ENCODE measurements at regions of chr2 and their contacts with region 1.

Region 1: GRCh38 chr2:38274286-38275276 is 102.5 kb downstream of the ATL2 start:
- DNase-seq: peak; percentile 72
- H3K4me3 ChIP-seq: no peak overlapping the region
- H3K27ac ChIP-seq: no peak overlapping the region
- H3K27me3 ChIP-seq: peaks cover 8% of the 10 kb centered on the region
- CTCF ChIP-seq: peak; percentile 68

Region 2: GRCh38 chr2:37890893-37891495 is 383.6 kb before region 1 on chr2:
- CTCF ChIA-PET with region 1: interaction called, 14 read pairs
- POLR2A ChIA-PET with region 1: no interaction called
- DNase-seq: no peak
- H3K4me3 ChIP-seq: no peak overlapping the region
- H3K27ac ChIP-seq: no peak overlapping the region
- H3K27me3 ChIP-seq: peaks cover under 1% of the 10 kb centered on the region
- CTCF ChIP-seq: peak; percentile 91

Region 3: DNA sequence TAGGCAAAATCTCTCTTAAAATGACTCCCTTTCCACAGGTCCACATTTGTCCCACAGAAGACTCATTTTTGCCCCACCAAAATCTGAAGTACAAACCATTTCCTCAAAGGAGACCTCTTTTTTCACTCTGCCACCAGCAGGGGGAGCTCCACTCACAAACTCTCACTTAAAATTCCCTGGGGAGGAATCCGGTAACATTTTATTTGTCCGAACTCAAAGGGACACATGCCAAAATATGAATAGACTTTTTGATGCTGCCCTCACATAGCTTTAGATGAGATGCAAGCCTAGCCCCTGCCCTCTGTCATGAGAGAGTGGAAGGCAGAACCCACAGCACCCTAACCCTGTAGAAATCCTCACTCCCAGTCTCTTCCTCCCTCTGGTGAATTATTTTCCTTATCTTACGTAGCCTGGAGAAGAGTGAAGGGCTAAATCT is 292.4 kb before region 1 on chr2:
- CTCF ChIA-PET with region 1: interaction called, 40 read pairs
- POLR2A ChIA-PET with region 1: no interaction called
- DNase-seq: no peak
- H3K4me3 ChIP-seq: no peak overlapping the region
- H3K27ac ChIP-seq: no peak overlapping the region
- H3K27me3 ChIP-seq: no peaks in the 10 kb centered on the region
- CTCF ChIP-seq: peak; percentile 84

Region 4: GRCh38 chr2:38115216-38116032 is 159.2 kb before region 1 on chr2:
- CTCF ChIA-PET with region 1: interaction called, 11 read pairs
- POLR2A ChIA-PET with region 1: no interaction called
- DNase-seq: no peak
- H3K4me3 ChIP-seq: no peak overlapping the region
- H3K27ac ChIP-seq: no peak overlapping the region
- H3K27me3 ChIP-seq: peaks cover 2% of the 10 kb centered on the region
- CTCF ChIP-seq: peak; percentile 98

Measured in AG04450 (cell line).